ENCODE measurements at regions of chr10 and their contacts with region 1.

Region 1: GRCh38 chr10:44952779-44953231 is 6.8 kb upstream of the RASSF4 start:
- DNase-seq: no peak
- H3K4me3 Mint-ChIP-seq: no peak overlapping the region
- H3K27ac Mint-ChIP-seq: no peak overlapping the region
- H3K4me1 Mint-ChIP-seq: no peaks in the 10 kb centered on the region
- H3K27me3 Mint-ChIP-seq: no peaks in the 10 kb centered on the region
- CTCF ChIP-seq: no peak

Region 2: DNA sequence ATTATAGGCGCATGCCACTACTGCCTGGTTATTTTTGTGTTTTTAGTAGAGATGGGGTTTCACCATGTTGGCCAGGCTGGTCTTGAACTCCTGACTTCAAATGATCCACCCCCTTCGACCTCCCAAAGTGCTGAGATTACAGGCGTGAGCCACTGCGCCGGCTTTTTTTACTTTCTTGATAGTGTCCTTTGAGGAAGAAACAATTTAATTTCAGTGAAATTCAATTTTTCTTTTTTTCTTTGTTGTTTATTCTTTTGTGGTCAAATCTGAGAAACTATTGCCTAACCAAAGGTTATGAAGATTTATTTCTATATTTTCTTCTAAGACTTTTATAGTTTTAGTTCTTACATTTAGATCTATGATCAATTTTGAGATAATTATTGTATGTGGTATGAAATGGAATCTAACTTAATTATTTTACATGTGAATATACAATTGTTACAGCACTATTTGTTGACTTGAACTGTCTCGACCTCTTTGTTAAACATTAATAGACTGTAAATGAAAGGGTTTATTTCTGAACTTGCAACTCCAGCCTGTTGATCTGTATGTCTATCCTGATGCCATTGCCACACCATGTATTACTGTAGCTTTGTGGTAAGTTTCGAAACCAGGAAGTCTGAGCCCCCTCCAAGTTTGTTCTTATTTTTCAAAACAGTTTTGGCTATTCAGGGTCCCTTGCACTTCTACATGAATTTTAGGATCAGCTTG is 13.0 kb before region 1 on chr10:
- CTCF ChIA-PET with region 1: no interaction called
- POLR2A ChIA-PET with region 1: no interaction called
- intact Hi-C with region 1: no loop called
- DNase-seq: no peak
- H3K4me3 Mint-ChIP-seq: no peak overlapping the region
- H3K27ac Mint-ChIP-seq: no peak overlapping the region
- H3K4me1 Mint-ChIP-seq: peaks cover 6% of the 10 kb centered on the region
- H3K27me3 Mint-ChIP-seq: no peaks in the 10 kb centered on the region
- CTCF ChIP-seq: no peak

Region 3: GRCh38 chr10:44965651-44966097 is 12.9 kb after region 1 on chr10:
- CTCF ChIA-PET with region 1: interaction called, 10 read pairs
- POLR2A ChIA-PET with region 1: no interaction called
- intact Hi-C with region 1: no loop called
- DNase-seq: no peak
- H3K4me3 Mint-ChIP-seq: no peak overlapping the region
- H3K27ac Mint-ChIP-seq: no peak overlapping the region
- H3K4me1 Mint-ChIP-seq: peaks cover 18% of the 10 kb centered on the region
- H3K27me3 Mint-ChIP-seq: no peaks in the 10 kb centered on the region
- CTCF ChIP-seq: no peak

Region 4: DNA sequence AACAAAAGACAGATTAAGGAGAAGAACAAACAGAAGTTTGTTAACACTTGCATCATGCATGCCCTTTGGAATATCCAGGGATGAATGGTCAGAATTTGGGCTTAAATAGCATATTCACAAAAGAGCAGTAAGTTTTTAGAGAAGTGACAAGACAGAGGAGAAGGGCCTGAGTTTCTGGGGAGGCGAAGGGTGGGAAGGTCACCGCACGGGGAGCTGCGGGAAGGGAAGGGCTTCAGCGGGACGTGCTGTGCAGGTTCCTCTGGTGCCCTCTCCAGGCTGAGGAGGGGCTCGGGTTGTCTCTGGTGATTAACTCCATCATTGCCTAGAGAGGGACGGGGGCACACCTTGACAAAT is 37.5 kb after region 1 on chr10:
- CTCF ChIA-PET with region 1: no interaction called
- POLR2A ChIA-PET with region 1: no interaction called
- intact Hi-C with region 1: no loop called
- DNase-seq: no peak
- H3K4me3 Mint-ChIP-seq: no peak overlapping the region
- H3K27ac Mint-ChIP-seq: no peak overlapping the region
- H3K4me1 Mint-ChIP-seq: peaks cover 14% of the 10 kb centered on the region
- H3K27me3 Mint-ChIP-seq: no peaks in the 10 kb centered on the region
- CTCF ChIP-seq: no peak

Measured in MCF 10A (cell line).